ENCODE measurements at regions of chr12 and their contacts with region 1.

Region 1: DNA sequence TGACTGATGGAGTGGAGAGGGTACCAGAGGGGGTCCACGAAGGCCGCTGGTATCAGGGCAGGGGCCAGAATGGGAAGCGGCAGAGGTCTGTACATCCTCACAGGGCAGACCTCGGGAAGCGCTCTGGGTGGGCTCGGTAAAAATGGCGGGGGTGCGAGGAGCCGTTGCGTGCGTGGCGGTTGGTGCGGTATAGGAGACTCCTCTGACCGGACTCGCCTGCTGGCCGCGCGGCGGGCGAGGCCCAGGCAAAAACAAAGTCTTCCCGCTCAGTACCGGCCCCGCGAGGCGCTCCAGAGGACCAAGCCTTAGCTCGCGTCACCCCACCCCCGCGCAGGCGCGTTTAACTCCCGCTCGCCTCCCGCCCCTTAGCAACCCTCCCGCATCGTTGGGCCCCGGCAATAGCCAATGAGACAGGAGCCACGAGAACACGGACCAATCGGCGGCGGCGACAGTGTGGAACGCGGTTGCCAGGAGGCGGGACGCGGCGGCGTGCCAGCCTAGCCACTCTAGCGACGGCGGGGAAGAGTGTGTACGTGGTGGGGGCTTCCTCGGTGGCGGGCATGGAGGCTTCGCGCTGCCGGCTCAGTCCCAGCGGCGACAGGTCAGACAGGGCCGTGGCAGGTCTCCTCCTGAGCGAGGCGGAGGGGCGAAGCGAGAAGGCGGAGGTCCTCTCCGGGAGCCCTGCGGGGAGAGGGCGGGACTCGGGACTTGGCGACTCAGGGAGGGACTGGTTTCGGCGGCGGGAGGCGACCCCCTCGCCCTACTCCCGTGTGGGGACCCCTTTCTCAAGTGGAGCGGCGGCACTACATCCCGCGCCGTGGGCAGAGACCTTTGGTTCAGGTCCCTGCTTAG is at the start of gene TULP3:
- DNase-seq: peak; percentile 99
- ATAC-seq: peak; percentile 99
- total RNA-seq, gene TULP3: 6.8 TPM

Region 2: DNA sequence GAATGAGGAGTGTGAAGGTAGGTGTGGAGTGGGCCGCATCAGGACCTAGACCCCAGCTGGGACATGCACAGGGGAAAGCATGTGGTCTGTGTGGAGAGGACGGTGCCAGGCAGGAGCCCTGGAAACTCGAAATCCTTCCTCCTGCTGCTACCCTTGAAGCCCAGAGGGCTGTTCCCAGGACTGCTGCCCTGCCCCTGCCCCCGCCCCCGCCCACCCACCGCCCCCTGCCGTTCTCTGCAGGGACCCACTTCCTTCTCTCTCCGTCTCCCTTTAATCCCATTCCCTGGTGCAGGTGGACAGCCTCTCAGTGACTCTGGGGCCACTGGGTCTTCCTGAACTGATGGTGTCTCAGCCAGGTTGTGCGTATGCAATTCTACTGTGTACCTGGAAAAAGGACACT is 70.2 kb before region 1 on chr12:
- intact Hi-C with region 1: no loop called
- DNase-seq: no peak
- ATAC-seq: no peak

Region 3: DNA sequence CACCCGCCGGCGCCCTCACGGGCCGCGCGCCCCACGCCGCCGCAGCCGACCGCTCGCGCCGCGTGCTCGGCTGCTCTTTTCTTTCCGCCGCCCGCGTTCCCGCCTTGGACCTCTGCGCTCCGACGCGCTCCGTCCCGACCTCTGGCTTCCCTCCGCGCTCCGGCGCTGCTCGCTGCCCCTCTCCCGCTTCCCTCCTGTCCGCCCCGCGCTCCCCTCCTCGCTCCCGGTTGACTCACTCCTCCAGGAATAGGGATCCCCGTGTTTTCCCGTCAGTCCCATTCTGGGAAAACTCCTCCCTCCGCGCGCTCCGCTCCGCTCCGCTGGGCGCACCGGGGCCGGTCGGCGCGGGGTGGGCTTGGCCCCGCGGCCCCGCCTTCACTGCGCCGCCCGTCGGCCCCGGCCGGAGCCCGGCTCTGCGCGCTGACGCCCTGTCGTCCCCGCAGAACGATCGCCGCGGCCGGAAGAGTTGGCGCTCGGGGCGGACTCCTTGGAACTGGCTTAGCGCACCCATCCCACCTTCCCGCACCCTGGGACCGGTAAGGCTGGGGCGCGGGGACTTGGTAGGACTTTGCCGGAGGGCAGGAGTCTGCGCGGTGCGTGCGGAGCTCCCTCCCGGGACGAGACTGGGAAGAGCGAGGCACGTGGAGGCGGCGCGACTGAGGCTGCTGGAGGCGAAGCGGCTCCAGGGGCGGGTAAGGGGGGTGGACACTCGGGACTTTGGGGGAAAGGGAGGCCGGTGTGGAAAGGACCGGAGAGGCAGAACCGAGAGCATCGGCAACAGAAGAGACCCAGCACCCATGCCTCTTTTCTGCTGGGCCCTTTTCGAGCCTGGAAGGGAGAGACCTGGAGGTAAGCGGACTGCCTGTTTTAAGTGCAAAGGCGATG is 69.1 kb after region 1 on chr12:
- intact Hi-C with region 1: loop called (anchors 5 kb)
- DNase-seq: peak; percentile 78
- ATAC-seq: peak; percentile 60